ENCODE measurements at regions of chr3 and their contacts with region 1.

Region 1: GRCh38 chr3:37114251-37115145 is 59.9 kb downstream of the LRRFIP2 start:
- DNase-seq: no peak
- ATAC-seq: no peak
- H3K4me3 ChIP-seq: no peak overlapping the region
- H3K27ac ChIP-seq: no peak overlapping the region
- H3K4me1 ChIP-seq: no peaks in the 10 kb centered on the region
- H3K27me3 ChIP-seq: no peaks in the 10 kb centered on the region
- CTCF ChIP-seq: no peak

Region 2: DNA sequence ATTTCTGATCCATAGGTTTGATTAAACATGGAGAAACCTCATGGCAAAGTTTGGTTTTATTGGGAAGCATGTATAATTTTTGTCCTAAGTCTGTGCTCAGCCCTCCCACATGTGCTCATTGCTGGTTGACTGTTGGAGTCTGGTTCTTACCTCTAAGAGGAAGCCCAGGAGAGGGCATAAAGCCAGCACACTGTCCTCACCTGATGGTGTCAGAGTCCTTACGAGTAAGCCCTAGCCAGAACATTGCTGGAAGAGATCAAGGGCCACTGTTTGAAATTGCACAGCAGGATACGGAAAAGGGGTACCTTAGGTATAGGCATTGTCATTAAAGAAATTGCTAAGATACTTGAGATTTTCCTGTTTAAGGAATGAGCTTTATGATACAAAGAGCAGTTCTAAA is 99.9 kb before region 1 on chr3:
- CTCF ChIA-PET with region 1: no interaction called
- POLR2A ChIA-PET with region 1: no interaction called
- in situ Hi-C with region 1: no loop called
- intact Hi-C with region 1: no loop called
- DNase-seq: no peak
- ATAC-seq: no peak
- H3K4me3 ChIP-seq: no peak overlapping the region
- H3K27ac ChIP-seq: no peak overlapping the region
- H3K4me1 ChIP-seq: no peaks in the 10 kb centered on the region
- H3K27me3 ChIP-seq: no peaks in the 10 kb centered on the region
- CTCF ChIP-seq: no peak

Region 3: GRCh38 chr3:37229740-37230139 is 115.2 kb after region 1 on chr3:
- CTCF ChIA-PET with region 1: no interaction called
- POLR2A ChIA-PET with region 1: interaction called, 11 read pairs
- in situ Hi-C with region 1: no loop called
- intact Hi-C with region 1: no loop called
- DNase-seq: no peak
- ATAC-seq: no peak
- H3K4me3 ChIP-seq: no peak overlapping the region
- H3K27ac ChIP-seq: no peak overlapping the region
- H3K4me1 ChIP-seq: no peaks in the 10 kb centered on the region
- H3K27me3 ChIP-seq: no peaks in the 10 kb centered on the region
- CTCF ChIP-seq: no peak

Measured in Panc1 (cell line).